AG04449 (cell line): ENCODE measurements at regions of chr1 and their contacts with region 1.

Region 1: GRCh38 chr1:84689514-84690396 is 506 bp downstream of the SSX2IP start:
- DNase-seq: no peak
- H3K4me3 ChIP-seq: peak overlapping the region; percentile 77
- CTCF ChIP-seq: peak; percentile 37

Region 2: DNA sequence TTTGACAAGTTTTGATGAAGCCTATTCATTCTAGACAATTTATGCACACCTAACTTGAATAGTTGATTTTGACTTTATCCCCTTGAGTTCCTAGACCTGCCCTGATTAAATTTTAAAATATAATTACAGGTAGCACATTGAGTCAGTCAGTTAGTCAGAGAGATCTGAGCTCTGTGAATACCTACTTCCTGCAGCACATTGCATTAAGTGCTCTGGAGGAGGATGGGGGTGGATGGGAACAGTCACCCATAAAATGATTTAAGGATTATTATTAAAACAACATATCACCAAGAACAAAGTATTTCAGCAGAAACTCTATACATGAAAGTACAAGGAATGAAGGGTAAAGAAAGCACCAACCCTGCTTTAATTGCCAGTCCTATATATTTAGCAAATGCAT is 222.5 kb before region 1 on chr1:
- CTCF ChIA-PET with region 1: no interaction called
- POLR2A ChIA-PET with region 1: no interaction called
- DNase-seq: no peak
- H3K4me3 ChIP-seq: no peak overlapping the region
- CTCF ChIP-seq: no peak

Region 3: DNA sequence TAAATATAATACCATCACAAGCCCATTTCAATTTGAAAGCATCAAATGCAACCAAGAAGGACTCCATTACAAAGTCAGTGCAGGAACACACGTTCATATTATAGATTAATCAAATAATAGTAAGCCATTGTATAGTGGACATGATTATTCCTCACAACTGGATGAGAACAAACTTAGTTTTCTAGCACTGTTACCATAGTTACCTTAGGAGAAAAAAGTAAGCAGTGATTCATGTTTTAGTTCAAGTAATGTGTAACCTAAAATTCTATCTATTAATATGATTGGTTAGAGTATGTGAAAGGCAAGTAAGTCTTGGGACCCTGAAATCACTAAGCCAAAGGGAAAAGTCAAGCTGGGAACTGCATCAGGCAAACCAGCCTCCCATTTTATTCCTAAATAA is 14.7 kb before region 1 on chr1:
- CTCF ChIA-PET with region 1: interaction called, 14 read pairs
- POLR2A ChIA-PET with region 1: interaction called, 3 read pairs
- DNase-seq: no peak
- H3K4me3 ChIP-seq: no peak overlapping the region
- CTCF ChIP-seq: no peak